Activated CD8-positive, alpha-beta memory T cell treated with anti-CD3 and anti-CD28 coated beads, Interleukin-2, amount 10 ng/mL, durations not matched to agents 7 days and 5 days (primary cell): ENCODE measurements at regions of chr1 and their contacts with region 1.

Region 1: DNA sequence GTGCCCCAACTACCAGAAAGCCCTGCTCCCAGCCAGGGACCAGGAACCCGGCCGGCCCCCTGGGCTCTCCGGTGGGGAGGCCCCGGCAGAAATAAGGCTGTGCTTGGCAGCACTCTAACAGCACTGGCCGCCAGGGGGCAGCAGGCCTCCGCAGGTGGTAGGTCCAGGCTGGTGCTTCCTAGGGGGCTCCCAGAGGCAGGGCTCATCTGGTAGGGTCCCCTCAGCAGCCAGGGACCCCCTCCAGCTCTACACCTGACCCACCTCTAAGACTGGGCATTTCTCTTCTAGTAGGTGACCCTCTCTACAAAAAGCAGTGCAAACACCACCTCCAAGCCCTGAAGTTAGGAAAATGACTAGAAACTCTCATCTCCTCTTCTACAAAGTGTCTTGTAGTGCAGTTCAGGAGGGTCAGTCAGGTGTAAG is 85.6 kb downstream of the STUM start:
- DNase-seq: peak; percentile 84
- ATAC-seq: peak; percentile 90
- H3K4me3 Mint-ChIP-seq: no peak overlapping the region
- H3K27ac Mint-ChIP-seq: peak overlapping the region; percentile 17
- H3K4me1 Mint-ChIP-seq: peaks cover 28% of the 10 kb centered on the region
- H3K27me3 Mint-ChIP-seq: no peaks in the 10 kb centered on the region

Region 2: DNA sequence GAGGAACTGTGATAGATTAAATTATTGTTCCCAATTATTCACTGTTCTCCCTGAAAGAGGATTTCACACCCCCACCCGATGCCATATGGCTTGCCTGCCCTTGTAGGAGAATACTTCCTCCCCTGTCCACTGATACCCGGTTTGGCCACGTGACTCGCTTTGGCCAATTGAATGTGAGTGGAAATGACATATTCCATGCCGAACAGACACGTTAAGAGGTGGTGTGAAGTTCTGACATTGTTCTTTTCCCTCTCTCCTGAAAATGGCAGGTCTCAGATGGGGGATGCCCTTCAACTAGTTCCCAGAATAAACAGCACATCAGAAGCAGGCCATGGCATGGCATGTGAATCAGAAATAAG is 80.3 kb before region 1 on chr1:
- CTCF ChIA-PET with region 1: no interaction called
- DNase-seq: no peak
- ATAC-seq: no peak
- H3K4me3 Mint-ChIP-seq: no peak overlapping the region
- H3K27ac Mint-ChIP-seq: no peak overlapping the region
- H3K4me1 Mint-ChIP-seq: peaks cover 7% of the 10 kb centered on the region
- H3K27me3 Mint-ChIP-seq: peaks cover 80% of the 10 kb centered on the region

Region 3: GRCh38 chr1:226649780-226650179 is 15.6 kb after region 1 on chr1:
- CTCF ChIA-PET with region 1: interaction called, 11 read pairs
- DNase-seq: peak; percentile 59
- ATAC-seq: no peak
- H3K4me3 Mint-ChIP-seq: no peak overlapping the region
- H3K27ac Mint-ChIP-seq: peak overlapping the region; percentile 61
- H3K4me1 Mint-ChIP-seq: peaks cover 55% of the 10 kb centered on the region
- H3K27me3 Mint-ChIP-seq: no peaks in the 10 kb centered on the region

Region 4: DNA sequence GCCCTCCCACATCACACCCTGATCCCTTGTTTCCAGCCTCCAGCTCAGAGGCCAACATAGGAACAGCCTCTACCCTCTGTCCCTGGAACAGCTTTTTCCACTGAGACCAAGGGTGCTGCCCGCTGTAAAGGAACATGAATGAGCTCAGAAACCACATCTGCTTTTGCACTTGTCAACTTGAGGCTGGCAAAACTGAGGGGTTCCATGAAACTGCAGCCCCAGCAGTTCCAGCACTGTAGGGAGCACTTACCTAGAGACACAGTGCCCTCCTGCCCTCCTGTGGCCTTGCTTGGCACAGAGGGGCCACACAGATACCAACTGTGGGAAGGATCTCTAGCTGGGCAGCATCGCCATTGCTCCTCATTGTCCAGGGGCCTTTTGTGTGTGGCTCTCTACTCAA is 53.2 kb after region 1 on chr1:
- CTCF ChIA-PET with region 1: interaction called, 11 read pairs
- DNase-seq: no peak
- ATAC-seq: peak; percentile 32
- H3K4me3 Mint-ChIP-seq: no peak overlapping the region
- H3K27ac Mint-ChIP-seq: no peak overlapping the region
- H3K4me1 Mint-ChIP-seq: peaks cover 84% of the 10 kb centered on the region
- H3K27me3 Mint-ChIP-seq: no peaks in the 10 kb centered on the region